ENCODE measurements at regions of chr17 and their contacts with region 1.

Region 1: DNA sequence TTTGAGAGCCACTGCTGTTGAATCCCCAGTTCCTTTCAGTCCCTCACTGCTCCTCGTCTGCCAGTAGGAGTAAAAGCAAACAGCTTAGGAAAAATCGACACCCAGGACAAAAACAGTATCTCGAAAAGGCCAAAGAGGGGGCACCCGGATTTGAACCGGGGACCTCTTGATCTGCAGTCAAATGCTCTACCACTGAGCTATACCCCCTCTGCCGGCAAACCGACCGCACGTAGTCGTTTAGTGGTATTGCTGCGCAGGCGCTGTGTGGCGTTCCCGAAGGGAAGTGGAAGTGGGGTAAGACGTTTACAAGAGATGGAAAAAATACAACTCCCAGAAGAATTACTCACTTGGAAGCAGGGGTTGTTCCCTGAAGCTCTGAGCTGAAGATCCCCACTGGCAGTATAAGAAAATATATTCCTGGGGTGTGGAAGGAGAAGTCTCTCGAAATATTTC is 2.2 kb upstream of the PLXDC1 start:
- DNase-seq: peak; percentile 96
- H3K4me3 ChIP-seq: peak overlapping the region; percentile 70 to 99 (median 88)
- H3K27ac ChIP-seq: peak overlapping the region; percentile 69 to 95 (median 92)
- H3K4me1 ChIP-seq: peaks cover 10 to 47% (median 33%) of the 10 kb centered on the region in 6 donors
- H3K27me3 ChIP-seq: peaks cover 0 to 34% (median 18%) of the 10 kb centered on the region in 7 donors
- CTCF ChIP-seq: peak in 3 of 11 experiments; percentile 12 to 42 (median 23)
- POLR2A ChIP-seq: no peak

Region 2: GRCh38 chr17:38982858-38983746 is 170.5 kb before region 1 on chr17:
- intact Hi-C with region 1: loop called (anchors 5 kb)
- DNase-seq: no peak
- H3K4me3 ChIP-seq: no peak overlapping the region
- H3K27ac ChIP-seq: no peak overlapping the region
- H3K4me1 ChIP-seq: peaks cover 0 to 14% (median 6%) of the 10 kb centered on the region in 6 donors
- H3K27me3 ChIP-seq: peaks cover 0 to 14% (median 0%) of the 10 kb centered on the region in 7 donors
- CTCF ChIP-seq: peak; percentile 58 to 88 (median 77)
- POLR2A ChIP-seq: no peak

Region 3: DNA sequence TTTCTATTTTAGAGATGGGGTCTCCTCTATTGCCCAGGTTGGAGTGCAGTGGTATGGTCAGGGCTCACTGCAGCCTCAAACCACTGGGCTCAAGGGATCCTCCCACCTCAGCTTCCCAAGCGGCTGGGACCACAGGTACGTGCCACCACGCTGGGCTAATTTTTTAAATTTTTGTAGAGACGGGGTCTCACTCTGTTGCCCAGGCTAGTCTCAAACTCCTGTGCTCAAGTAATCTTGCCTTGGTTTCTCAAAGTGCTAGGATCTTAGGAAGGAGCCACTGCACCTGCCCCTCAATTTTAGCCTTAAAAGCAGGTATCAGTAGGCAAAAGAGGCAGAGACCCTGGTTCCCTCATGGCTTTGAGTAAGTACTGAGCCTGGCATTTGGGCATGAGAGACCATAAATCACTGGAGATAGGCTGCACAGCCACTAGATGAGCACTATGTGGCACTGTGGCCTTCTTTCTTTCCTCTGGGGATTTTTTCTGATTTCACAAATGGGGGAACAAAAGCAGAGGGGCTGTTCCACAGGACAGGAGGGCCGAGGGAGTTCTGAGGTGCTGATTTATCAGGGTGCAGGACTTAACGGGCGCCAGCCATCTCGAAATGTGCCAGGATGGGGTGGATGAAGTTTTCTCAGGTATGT is 84.4 kb before region 1 on chr17:
- intact Hi-C with region 1: loop called (anchors 5 kb)
- DNase-seq: no peak
- H3K4me3 ChIP-seq: no peak overlapping the region
- H3K27ac ChIP-seq: peak overlapping the region in 4 of 8 donors; percentile 5 to 58 (median 40)
- H3K4me1 ChIP-seq: peaks cover 0 to 9% (median 2%) of the 10 kb centered on the region in 6 donors
- H3K27me3 ChIP-seq: no peaks in the 10 kb centered on the region
- CTCF ChIP-seq: peak; percentile 47 to 78 (median 66)
- POLR2A ChIP-seq: no peak